ENCODE measurements at regions of chr17 and their contacts with region 1.

Region 1: GRCh38 chr17:57243171-57243948 is 13.0 kb upstream of the MSI2 start:
- DNase-seq: peak; percentile 86
- H3K4me3 Mint-ChIP-seq: no peak overlapping the region
- H3K27ac Mint-ChIP-seq: no peak overlapping the region
- H3K4me1 Mint-ChIP-seq: no peaks in the 10 kb centered on the region
- H3K27me3 Mint-ChIP-seq: peaks cover 2% of the 10 kb centered on the region

Region 2: GRCh38 chr17:57255776-57256681 is 12.7 kb after region 1 on chr17 and contains the start of gene MSI2:
- CTCF ChIA-PET with region 1: interaction called, 29 read pairs
- POLR2A ChIA-PET with region 1: interaction called, 3 read pairs
- intact Hi-C with region 1: no loop called
- DNase-seq: peak; percentile 90
- H3K4me3 Mint-ChIP-seq: peak within 1 kb of the TSS; percentile 85
- H3K27ac Mint-ChIP-seq: peak within 1 kb of the TSS; percentile 85
- H3K4me1 Mint-ChIP-seq: peaks cover 41% of the 10 kb centered on the region
- H3K27me3 Mint-ChIP-seq: no peaks in the 10 kb centered on the region
- total RNA-seq, gene MSI2: 65.7 to 71.9 TPM

Region 3: DNA sequence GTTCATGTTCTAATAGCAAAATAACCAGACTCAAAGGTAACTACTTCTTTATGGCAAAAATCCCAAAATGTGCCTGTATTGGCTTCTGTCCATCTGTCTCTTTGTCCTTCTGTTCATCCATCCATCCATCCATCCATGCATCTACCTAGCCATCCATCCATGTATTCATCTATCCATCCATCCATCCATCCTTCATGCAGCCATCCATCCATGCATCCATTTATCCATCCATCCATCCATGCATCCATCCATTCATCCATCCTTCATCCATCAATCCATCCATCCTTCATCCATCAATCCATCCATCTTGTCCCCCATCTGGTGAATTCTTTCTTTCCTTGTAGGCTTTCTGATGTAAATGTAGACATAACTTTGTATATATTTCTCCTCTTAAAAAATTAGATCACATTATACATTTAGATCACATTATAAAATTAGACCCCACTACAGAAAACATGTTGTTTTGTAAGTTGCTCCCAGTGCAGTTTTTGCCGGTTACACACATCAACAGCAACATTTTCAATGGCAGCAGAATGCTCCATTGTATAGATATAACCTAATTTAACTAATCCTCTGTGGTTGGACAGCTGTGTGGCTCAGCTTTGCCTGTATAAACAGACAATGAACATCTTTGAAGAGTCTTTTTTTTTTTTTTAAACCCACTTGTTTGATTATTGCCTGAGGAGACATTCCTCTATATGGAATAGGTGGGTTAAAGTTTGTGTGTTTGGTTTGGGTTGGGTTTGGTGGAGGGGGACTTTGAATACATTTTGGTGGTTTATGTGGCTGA is 84.9 kb after region 1 on chr17:
- CTCF ChIA-PET with region 1: interaction called, 12 read pairs
- POLR2A ChIA-PET with region 1: no interaction called
- intact Hi-C with region 1: no loop called
- DNase-seq: no peak
- H3K4me3 Mint-ChIP-seq: no peak overlapping the region
- H3K27ac Mint-ChIP-seq: no peak overlapping the region
- H3K4me1 Mint-ChIP-seq: peaks cover 40% of the 10 kb centered on the region
- H3K27me3 Mint-ChIP-seq: no peaks in the 10 kb centered on the region

Region 4: DNA sequence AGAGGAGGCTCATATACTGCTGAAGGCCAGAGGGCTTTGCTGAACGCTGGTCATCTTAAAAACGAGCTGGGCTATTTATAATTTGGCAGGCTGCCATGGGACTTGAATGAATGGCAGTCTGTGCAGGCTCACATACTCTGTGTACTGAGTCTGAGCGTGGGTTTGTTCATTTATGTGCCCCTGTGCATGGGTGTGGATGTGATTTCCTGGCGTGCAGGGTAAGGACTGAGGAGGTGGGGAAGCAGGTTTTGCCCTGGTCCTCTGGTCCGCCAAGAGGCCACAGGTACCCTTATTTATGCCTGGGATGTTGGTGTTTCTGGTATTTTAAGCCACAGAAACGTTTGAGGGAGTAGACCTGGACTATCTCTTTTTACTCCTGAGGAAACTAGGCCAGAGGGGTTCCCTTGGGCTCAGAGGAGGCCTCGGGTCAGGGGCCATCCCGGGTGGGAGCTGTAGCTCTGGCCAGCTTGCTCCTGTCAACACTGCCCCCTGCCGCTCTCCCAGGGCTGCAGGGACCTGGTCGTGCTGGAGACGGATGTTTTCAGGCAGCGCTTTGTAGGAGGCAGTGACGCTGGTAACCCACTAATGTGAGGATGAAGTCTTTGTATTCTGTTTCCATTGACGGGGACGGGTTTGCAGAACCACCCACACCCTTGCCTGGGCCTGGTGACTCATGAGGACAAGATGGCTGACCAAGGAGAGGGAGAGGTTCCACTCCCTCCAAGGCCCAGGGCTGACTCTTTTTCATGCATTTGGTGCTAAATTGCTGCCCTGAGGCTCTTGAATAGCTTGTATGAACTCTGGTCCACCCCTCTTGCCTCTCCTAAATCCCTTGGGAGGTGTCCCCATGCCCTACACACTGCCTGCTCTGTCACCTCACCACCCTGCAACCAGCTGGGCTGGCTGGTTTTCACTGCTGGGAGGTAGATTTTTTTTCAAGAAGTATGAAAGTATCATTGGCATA is 197.4 kb after region 1 on chr17:
- CTCF ChIA-PET with region 1: interaction called, 76 read pairs
- POLR2A ChIA-PET with region 1: no interaction called
- intact Hi-C with region 1: loop called (anchors 1 kb)
- DNase-seq: peak; percentile 93
- H3K4me3 Mint-ChIP-seq: peak overlapping the region; percentile 37
- H3K27ac Mint-ChIP-seq: peak overlapping the region; percentile 98
- H3K4me1 Mint-ChIP-seq: peaks cover 84% of the 10 kb centered on the region
- H3K27me3 Mint-ChIP-seq: no peaks in the 10 kb centered on the region

Region 5: DNA sequence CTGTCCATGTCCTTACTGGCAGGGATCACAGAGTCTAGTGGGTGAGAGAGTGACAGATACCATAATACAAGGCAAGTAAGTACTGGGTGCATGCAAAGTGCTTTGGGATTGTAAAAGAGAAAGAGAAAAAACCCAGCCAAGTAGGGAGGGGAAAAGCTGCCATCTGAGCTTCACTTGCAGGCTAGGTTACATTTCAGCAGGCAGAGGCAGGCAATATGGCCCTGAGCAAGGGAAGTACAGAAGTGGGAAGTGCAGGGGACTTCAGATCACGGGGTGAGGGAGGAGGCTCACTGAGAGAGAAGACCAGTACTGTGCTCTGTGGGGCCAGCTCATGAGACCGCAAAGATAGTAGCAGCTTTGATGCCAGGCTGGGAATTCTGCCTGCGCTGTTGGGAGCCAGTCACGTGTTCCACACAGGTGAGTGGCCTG is 243.5 kb after region 1 on chr17:
- CTCF ChIA-PET with region 1: interaction called, 11 read pairs
- POLR2A ChIA-PET with region 1: no interaction called
- intact Hi-C with region 1: no loop called
- DNase-seq: no peak
- H3K4me3 Mint-ChIP-seq: no peak overlapping the region
- H3K27ac Mint-ChIP-seq: no peak overlapping the region
- H3K4me1 Mint-ChIP-seq: peaks cover 49% of the 10 kb centered on the region
- H3K27me3 Mint-ChIP-seq: no peaks in the 10 kb centered on the region

Region 6: DNA sequence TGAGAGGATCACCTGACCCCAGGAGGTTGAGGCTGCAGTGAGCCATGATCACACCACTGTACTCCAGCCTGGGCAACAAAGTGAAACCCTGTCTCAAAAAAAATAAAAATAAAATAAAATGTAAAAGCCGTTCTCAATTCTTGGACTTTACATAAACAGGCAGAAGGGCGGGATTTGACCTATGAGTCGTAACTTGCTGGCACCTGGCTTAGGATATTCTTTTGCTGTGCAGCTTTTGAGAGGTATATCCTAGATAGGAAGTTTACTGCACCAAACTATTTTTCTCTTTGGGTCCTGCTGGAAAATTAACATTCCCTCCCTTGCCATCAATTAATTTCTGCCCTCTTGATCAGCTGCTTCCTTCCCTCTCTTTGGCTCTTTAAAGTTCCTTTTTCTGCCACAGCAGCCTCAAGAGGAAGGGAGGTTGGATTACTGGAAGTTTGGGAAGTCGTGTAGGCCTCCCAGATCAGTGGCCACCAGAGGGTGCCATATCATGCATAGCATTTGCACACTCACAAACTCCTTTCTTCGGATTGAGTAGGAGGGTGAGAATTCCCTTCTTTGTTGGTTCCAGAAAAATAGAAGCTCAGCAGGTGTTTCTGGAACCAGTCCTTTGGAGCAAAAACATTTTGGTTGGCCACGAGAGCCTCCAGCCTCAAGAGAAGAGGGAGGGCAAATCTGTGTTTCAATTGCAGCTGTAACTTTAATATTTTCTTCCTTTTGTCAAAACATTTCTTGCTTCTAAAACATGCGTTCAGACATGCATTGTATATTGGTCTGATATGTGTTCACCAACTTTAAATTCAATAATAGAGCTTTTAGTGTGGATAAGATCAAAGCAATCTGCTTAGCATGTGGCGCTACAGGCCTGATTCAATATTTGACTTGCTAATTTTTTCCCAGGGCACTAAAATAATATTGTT is 354.4 kb after region 1 on chr17:
- CTCF ChIA-PET with region 1: interaction called, 16 read pairs
- POLR2A ChIA-PET with region 1: no interaction called
- intact Hi-C with region 1: loop called (anchors 5 kb)
- DNase-seq: peak; percentile 51
- H3K4me3 Mint-ChIP-seq: no peak overlapping the region
- H3K27ac Mint-ChIP-seq: peak overlapping the region; percentile 90
- H3K4me1 Mint-ChIP-seq: peaks cover 52% of the 10 kb centered on the region
- H3K27me3 Mint-ChIP-seq: no peaks in the 10 kb centered on the region

Region 7: DNA sequence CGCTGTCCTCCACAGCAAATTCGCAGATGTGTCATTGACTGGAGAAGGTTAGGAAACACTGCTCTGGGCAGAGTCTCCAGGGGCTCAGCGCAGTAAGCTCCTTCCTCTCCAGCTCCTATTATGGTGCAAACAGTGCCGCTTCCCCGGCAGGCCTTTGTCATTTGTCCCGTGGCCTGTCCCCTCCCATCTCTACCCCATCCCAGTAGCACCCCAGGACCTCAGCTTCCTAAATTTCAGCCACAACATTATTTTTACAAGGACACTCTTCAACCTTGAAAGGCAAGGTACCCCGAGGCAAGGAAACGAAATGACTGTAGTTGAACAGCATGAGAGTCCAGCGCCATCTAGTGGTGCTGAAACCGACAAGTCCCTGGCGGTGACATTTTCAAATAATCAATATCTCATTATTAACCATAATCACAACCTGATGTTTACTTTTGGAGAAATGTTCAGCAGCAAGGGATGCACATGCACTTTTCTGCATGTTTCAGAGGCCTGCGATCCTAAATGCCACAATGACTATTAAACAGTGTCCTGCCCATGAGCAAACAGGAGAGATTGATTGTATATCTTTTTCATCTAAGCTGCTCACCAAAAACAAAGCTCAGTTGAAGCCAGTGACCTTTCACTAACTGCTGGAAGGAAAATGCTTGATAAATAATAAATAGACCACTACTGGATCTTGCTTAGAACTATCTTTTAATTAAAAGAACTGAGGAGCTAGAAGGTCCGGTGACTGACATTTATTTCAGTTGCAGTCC is 590.0 kb after region 1 on chr17:
- CTCF ChIA-PET with region 1: interaction called, 20 read pairs
- POLR2A ChIA-PET with region 1: no interaction called
- intact Hi-C with region 1: no loop called
- DNase-seq: peak; percentile 73
- H3K4me3 Mint-ChIP-seq: no peak overlapping the region
- H3K27ac Mint-ChIP-seq: no peak overlapping the region
- H3K4me1 Mint-ChIP-seq: peaks cover 6% of the 10 kb centered on the region
- H3K27me3 Mint-ChIP-seq: no peaks in the 10 kb centered on the region